MCF 10A (cell line): ENCODE measurements at regions of chr11 and their contacts with region 1.

Region 1: DNA sequence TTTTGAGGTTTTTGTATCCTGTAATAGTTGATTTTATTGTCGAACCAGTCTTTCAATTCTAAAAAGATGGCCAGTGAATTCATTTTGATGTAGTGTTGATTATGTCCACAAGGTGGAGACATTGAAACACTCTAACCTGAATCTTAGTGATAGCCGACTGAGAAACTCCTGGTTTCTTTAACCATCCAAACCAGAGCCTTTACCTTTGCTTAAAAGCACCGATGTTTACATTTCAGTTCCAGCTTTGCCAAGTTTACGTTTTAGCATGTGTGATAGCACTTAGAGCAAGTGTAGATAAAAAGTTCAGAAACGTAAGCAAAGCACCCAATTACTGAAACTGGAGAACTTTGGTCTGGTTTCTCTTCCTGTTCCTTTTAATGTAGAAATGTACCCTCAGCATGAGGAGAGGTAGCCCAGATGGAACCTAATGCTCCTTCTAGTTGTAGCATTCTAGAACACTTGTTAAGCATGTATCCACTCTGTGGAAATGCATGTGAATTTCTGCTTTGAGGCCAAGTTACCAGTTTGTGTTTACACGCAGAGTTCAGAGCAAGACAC is 208.6 kb downstream of the DBX1 start:
- DNase-seq: peak; percentile 76
- H3K4me3 Mint-ChIP-seq: peak overlapping the region; percentile 28
- H3K27ac Mint-ChIP-seq: peak overlapping the region; percentile 64
- H3K4me1 Mint-ChIP-seq: peaks cover 41% of the 10 kb centered on the region
- H3K27me3 Mint-ChIP-seq: no peaks in the 10 kb centered on the region
- CTCF ChIP-seq: peak; percentile 60

Region 2: DNA sequence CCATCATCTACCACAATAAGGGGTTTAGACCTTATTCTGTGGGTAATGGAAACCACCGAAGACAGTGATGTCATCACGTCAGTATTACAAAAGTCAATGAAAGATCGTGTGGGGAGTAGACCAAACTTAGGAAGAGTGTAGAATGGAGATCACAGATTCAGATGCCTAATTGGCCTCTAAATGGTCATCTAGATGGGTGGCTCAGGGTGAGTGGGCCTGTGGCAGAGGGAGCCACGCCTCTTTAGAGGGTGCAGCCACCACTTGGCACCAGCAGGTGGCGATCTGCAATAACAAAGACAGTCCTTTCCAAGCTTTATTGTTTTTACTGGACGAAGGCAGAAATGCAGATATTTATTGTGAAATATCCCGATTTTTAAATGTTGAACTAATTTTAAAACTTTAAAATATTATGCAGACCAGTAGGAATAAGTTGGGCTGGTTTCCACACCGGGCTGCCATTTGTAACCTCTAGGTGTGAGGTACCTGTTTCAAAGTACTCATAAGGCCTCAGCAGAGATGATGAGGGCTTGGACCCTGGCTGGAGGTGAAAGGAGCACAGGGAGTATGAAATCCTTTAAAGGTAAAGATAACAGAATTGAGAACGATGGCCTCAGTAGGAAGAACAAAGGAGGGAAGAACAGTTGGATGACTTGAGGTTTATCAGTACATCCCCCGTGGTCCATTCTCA is 13.3 kb before region 1 on chr11:
- CTCF ChIA-PET with region 1: interaction called, 15 read pairs
- POLR2A ChIA-PET with region 1: no interaction called
- intact Hi-C with region 1: no loop called
- DNase-seq: peak; percentile 72
- H3K4me3 Mint-ChIP-seq: no peak overlapping the region
- H3K27ac Mint-ChIP-seq: peak overlapping the region; percentile 47
- H3K4me1 Mint-ChIP-seq: peaks cover 24% of the 10 kb centered on the region
- H3K27me3 Mint-ChIP-seq: no peaks in the 10 kb centered on the region
- CTCF ChIP-seq: peak; percentile 80

Region 3: DNA sequence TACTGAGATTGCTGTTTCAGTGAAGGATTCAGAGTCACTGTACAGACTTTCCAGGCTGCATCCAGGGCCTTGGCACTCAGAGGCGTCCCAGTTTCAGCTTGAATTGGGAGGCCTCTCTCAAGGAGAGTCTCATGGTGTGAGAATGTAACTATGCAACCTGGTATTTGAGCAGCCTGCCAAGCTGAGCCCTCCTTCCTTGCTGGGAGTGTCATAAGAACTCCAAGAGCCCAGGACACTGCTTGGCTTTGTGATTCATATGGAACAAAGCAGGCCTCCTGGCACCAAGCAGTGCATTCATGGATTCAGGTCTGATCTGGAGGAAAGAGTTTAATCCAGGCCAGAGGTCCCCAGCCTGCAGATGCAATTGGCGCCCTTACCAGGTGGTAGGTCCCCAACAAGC is 37.0 kb after region 1 on chr11:
- CTCF ChIA-PET with region 1: interaction called, 12 read pairs
- POLR2A ChIA-PET with region 1: interaction called, 8 read pairs
- intact Hi-C with region 1: no loop called
- DNase-seq: peak; percentile 53
- H3K4me3 Mint-ChIP-seq: no peak overlapping the region
- H3K27ac Mint-ChIP-seq: peak overlapping the region; percentile 98
- H3K4me1 Mint-ChIP-seq: peaks cover 41% of the 10 kb centered on the region
- H3K27me3 Mint-ChIP-seq: no peaks in the 10 kb centered on the region
- CTCF ChIP-seq: no peak

Region 4: GRCh38 chr11:20013346-20014066 is 61.9 kb after region 1 on chr11:
- CTCF ChIA-PET with region 1: interaction called, 45 read pairs
- POLR2A ChIA-PET with region 1: interaction called, 28 read pairs
- intact Hi-C with region 1: loop called (anchors 1 kb)
- DNase-seq: peak; percentile 67
- H3K4me3 Mint-ChIP-seq: no peak overlapping the region
- H3K27ac Mint-ChIP-seq: no peak overlapping the region
- H3K4me1 Mint-ChIP-seq: peaks cover 43% of the 10 kb centered on the region
- H3K27me3 Mint-ChIP-seq: no peaks in the 10 kb centered on the region
- CTCF ChIP-seq: no peak

Region 5: GRCh38 chr11:20035701-20036620 is 84.3 kb after region 1 on chr11:
- CTCF ChIA-PET with region 1: interaction called, 100 read pairs
- POLR2A ChIA-PET with region 1: interaction called, 10 read pairs
- intact Hi-C with region 1: loop called (anchors 1 kb)
- DNase-seq: peak; percentile 99
- H3K4me3 Mint-ChIP-seq: peak overlapping the region; percentile 59
- H3K27ac Mint-ChIP-seq: peak overlapping the region; percentile 92
- H3K4me1 Mint-ChIP-seq: peaks cover 66% of the 10 kb centered on the region
- H3K27me3 Mint-ChIP-seq: no peaks in the 10 kb centered on the region
- CTCF ChIP-seq: no peak

Region 6: DNA sequence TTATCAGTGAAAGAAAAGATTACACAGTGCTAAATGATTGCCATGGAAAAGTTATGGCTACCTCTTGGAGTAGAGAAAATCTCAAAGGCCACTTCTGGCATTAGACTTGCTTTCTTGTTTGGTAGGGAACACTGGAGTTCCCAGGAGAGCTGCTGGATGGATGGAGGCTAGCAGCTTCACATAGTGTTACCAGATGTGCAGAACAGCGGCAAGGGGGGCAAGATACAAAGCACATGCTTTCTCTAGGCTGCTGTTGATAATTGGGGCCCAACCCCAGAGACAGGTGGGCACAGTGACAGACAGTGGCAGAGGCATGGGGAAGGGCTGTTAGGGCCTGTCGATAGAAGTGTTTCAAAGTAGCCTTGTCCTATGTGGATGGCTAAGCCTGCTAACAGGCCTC is 113.8 kb after region 1 on chr11:
- CTCF ChIA-PET with region 1: interaction called, 11 read pairs
- POLR2A ChIA-PET with region 1: interaction called, 6 read pairs
- intact Hi-C with region 1: no loop called
- DNase-seq: no peak
- H3K4me3 Mint-ChIP-seq: no peak overlapping the region
- H3K27ac Mint-ChIP-seq: peak overlapping the region; percentile 12
- H3K4me1 Mint-ChIP-seq: peaks cover 19% of the 10 kb centered on the region
- H3K27me3 Mint-ChIP-seq: no peaks in the 10 kb centered on the region
- CTCF ChIP-seq: no peak

Region 7: DNA sequence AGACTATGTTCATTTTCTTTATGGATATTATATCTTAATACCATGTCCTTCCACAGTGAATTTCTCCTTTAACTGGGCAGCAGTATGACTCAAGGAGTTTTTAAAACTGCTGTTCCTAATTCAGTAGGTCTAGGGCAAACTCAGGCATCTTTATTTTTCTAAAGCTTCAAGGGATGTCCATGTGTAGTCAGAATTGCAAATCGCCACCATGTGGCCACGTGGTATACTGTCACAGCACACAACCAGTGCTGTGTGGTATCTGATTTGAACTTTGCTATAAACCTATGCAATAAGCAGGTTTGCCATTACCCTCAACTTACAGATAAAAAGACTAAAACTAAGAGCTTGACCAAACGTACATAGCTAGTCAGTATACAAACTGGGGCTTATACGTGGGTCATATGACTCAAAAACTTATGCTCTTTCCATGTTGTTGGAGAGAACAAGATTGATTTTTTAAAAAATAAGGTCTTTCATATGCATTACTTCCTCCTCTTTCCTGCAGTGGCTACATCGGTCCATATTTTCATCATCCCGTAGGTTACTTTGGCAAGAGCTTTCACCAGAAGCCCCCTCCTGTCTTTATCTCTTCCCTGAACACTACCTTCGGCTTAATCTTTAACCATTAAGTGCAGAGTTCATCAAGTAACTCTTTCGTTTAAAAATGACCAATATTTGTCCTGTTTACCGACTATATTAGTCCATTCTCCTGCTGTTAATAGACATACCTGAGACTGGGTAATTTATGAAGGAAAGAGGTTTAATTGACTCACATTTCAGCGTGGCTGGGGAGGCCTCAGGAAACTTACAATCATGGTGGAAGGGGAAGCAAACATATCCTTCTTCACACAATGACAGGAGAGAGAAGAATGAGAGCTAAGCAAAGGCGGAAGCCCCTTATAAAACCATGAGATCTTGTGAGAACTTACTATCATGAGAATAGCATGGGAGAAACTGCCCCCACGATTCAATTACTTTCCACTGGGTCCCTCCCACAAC is 403.9 kb after region 1 on chr11:
- CTCF ChIA-PET with region 1: interaction called, 14 read pairs
- POLR2A ChIA-PET with region 1: no interaction called
- intact Hi-C with region 1: loop called (anchors 5 kb)
- DNase-seq: peak; percentile 65
- H3K4me3 Mint-ChIP-seq: no peak overlapping the region
- H3K27ac Mint-ChIP-seq: no peak overlapping the region
- H3K4me1 Mint-ChIP-seq: peaks cover 17% of the 10 kb centered on the region
- H3K27me3 Mint-ChIP-seq: no peaks in the 10 kb centered on the region
- CTCF ChIP-seq: peak; percentile 69